B cell (primary cell): ENCODE measurements at regions of chr3 and their contacts with region 1.

Region 1: GRCh38 chr3:61371123-61371522 is 119.9 kb upstream of the FHIT start:
- DNase-seq: peak; percentile 14
- ATAC-seq: no peak
- H3K4me3 ChIP-seq: no peak overlapping the region
- H3K4me3 Mint-ChIP-seq: no peak overlapping the region
- H3K27ac ChIP-seq: no peak overlapping the region
- H3K27ac Mint-ChIP-seq: no peak overlapping the region
- H3K4me1 ChIP-seq: no peaks in the 10 kb centered on the region
- H3K4me1 Mint-ChIP-seq: no peaks in the 10 kb centered on the region
- H3K27me3 ChIP-seq: no peaks in the 10 kb centered on the region
- H3K27me3 Mint-ChIP-seq: no peaks in the 10 kb centered on the region
- CTCF ChIP-seq: peak; percentile 71

Region 2: GRCh38 chr3:61381745-61382392 is 10.7 kb after region 1 on chr3:
- CTCF ChIA-PET with region 1: interaction called, 17 read pairs
- POLR2A ChIA-PET with region 1: no interaction called
- intact Hi-C with region 1: no loop called
- DNase-seq: peak; percentile 44
- ATAC-seq: peak; percentile 31
- H3K4me3 ChIP-seq: no peak overlapping the region
- H3K4me3 Mint-ChIP-seq: no peak overlapping the region
- H3K27ac ChIP-seq: no peak overlapping the region
- H3K27ac Mint-ChIP-seq: no peak overlapping the region
- H3K4me1 ChIP-seq: no peaks in the 10 kb centered on the region
- H3K4me1 Mint-ChIP-seq: no peaks in the 10 kb centered on the region
- H3K27me3 ChIP-seq: peaks cover 0 to 3% (median 0%) of the 10 kb centered on the region in 4 experiments
- H3K27me3 Mint-ChIP-seq: peaks cover 9% of the 10 kb centered on the region
- CTCF ChIP-seq: peak; percentile 86